MCF 10A (cell line): ENCODE measurements at regions of chr7 and their contacts with region 1.

Region 1: DNA sequence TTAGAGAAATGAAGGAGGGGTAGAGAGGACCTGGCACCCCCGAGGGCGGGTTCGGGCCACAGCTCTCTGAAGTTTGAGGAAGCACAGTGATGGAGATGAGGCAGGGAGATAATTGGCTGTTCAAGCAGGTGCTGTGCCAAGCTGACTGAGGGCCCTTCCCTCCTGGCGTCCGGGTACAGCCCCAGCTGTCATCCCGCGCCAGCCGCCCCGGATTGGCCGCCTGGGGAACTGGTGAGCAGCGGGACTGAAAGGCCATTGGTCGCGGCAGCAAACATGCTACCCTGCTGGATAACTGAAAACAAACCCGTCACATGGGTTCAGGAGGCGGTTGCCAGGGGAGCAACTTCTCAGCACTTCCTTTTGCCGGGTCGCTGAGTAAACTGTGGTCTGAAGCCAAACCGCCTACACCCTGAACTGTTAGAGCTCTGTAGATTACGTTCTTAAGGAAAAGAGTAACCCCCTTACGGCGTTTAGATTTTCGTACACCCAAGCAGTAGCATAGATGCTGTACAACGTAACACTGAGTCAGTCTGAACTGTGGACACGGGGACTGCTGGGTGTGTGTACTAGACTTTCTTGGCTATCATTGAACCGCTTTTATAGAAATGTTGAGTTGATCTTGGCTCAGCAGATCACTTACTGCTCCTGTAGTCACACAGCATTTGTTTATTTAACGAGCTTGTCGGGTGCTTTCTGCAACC is 1.3 kb downstream of the INSIG1 start:
- DNase-seq: peak; percentile 97
- H3K4me3 Mint-ChIP-seq: peak overlapping the region; percentile 82
- H3K27ac Mint-ChIP-seq: peak overlapping the region; percentile 52
- H3K4me1 Mint-ChIP-seq: peaks cover 22% of the 10 kb centered on the region
- H3K27me3 Mint-ChIP-seq: no peaks in the 10 kb centered on the region
- CTCF ChIP-seq: no peak

Region 2: DNA sequence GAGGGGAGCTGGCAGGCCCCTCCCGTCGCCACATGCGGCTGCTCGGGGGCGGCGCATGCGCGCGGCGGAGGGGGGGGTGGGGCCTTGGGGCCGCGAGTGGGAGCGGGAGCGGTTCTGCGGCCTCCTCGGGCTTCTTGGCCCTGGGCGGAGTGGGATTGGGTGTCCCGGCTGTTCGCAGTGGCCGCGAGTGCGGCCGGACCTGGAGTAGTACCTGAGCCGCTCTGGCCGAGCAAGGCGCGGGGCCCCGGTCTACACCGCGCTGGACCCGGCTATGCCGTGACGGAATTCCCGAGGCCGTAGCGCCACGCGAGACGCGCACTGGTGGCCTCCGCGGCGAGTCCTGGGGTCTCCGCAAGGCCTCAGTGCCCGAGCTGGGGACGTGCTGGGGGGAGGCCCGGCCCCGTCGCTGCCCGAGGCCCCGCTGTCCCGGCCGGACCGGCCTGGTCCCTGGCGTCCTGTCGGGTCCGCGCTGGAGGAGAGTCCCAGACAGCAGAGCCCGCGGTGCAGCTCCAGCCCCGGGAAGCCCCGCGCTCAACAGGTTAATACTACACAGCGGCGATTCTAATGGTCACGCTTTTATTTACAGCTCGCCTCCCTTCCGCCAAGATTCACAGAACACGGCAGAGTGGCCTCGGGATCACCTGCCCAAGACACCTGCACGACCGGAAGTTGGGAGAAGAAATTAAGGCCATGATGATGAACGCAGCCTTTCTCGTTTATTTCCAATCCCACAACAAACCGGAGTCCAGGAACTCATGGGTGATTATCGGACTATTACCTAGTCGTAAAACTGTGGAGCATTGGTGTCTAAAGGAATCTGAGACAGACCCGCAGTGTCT is 295.4 kb before region 1 on chr7:
- CTCF ChIA-PET with region 1: no interaction called
- POLR2A ChIA-PET with region 1: interaction called, 36 read pairs
- intact Hi-C with region 1: loop called (anchors 5 kb)
- DNase-seq: peak; percentile 76
- H3K4me3 Mint-ChIP-seq: peak overlapping the region; percentile 88
- H3K27ac Mint-ChIP-seq: peak overlapping the region; percentile 87
- H3K4me1 Mint-ChIP-seq: no peaks in the 10 kb centered on the region
- H3K27me3 Mint-ChIP-seq: no peaks in the 10 kb centered on the region
- CTCF ChIP-seq: no peak

Region 3: GRCh38 chr7:155166673-155167370 is 132.2 kb before region 1 on chr7:
- CTCF ChIA-PET with region 1: no interaction called
- POLR2A ChIA-PET with region 1: interaction called, 21 read pairs
- intact Hi-C with region 1: no loop called
- DNase-seq: peak; percentile 89
- H3K4me3 Mint-ChIP-seq: no peak overlapping the region
- H3K27ac Mint-ChIP-seq: peak overlapping the region; percentile 91
- H3K4me1 Mint-ChIP-seq: peaks cover 16% of the 10 kb centered on the region
- H3K27me3 Mint-ChIP-seq: peaks cover 6% of the 10 kb centered on the region
- CTCF ChIP-seq: no peak

Region 4: DNA sequence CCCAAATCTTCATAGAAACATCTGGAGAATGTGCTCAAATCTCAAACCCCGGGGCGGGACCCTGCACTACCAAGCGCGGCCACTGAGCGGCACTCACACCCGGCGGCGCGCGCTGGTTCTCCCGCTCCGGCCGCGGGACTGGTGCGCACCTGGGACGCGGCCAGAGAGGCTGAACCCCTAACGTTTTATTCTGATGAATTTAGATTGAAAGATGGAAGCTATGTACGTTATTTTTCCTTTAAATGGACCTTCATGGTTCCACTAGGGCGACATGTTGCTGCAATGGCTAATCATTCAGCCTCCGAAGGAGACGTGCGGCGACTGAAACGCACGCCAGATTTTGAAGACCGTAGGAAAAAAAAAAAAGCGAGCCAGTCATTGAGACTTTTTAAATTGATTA is 108.3 kb before region 1 on chr7:
- CTCF ChIA-PET with region 1: interaction called, 13 read pairs
- POLR2A ChIA-PET with region 1: interaction called, 3 read pairs
- intact Hi-C with region 1: loop called (anchors 1 kb)
- DNase-seq: peak; percentile 46
- H3K4me3 Mint-ChIP-seq: no peak overlapping the region
- H3K27ac Mint-ChIP-seq: no peak overlapping the region
- H3K4me1 Mint-ChIP-seq: peaks cover 5% of the 10 kb centered on the region
- H3K27me3 Mint-ChIP-seq: no peaks in the 10 kb centered on the region
- CTCF ChIP-seq: peak; percentile 85

Region 5: GRCh38 chr7:155205368-155206317 is 93.3 kb before region 1 on chr7:
- CTCF ChIA-PET with region 1: interaction called, 4 read pairs
- POLR2A ChIA-PET with region 1: interaction called, 10 read pairs
- intact Hi-C with region 1: loop called (anchors 5 kb)
- DNase-seq: peak; percentile 96
- H3K4me3 Mint-ChIP-seq: peak overlapping the region; percentile 17
- H3K27ac Mint-ChIP-seq: peak overlapping the region; percentile 56
- H3K4me1 Mint-ChIP-seq: peaks cover 17% of the 10 kb centered on the region
- H3K27me3 Mint-ChIP-seq: no peaks in the 10 kb centered on the region
- CTCF ChIP-seq: no peak

Region 6: GRCh38 chr7:155230168-155230593 is 68.8 kb before region 1 on chr7:
- CTCF ChIA-PET with region 1: interaction called, 5 read pairs
- POLR2A ChIA-PET with region 1: interaction called, 15 read pairs
- intact Hi-C with region 1: loop called (anchors 1 kb)
- DNase-seq: peak; percentile 95
- H3K4me3 Mint-ChIP-seq: peak overlapping the region; percentile 39
- H3K27ac Mint-ChIP-seq: peak overlapping the region; percentile 87
- H3K4me1 Mint-ChIP-seq: peaks cover 14% of the 10 kb centered on the region
- H3K27me3 Mint-ChIP-seq: no peaks in the 10 kb centered on the region
- CTCF ChIP-seq: no peak

Region 7: DNA sequence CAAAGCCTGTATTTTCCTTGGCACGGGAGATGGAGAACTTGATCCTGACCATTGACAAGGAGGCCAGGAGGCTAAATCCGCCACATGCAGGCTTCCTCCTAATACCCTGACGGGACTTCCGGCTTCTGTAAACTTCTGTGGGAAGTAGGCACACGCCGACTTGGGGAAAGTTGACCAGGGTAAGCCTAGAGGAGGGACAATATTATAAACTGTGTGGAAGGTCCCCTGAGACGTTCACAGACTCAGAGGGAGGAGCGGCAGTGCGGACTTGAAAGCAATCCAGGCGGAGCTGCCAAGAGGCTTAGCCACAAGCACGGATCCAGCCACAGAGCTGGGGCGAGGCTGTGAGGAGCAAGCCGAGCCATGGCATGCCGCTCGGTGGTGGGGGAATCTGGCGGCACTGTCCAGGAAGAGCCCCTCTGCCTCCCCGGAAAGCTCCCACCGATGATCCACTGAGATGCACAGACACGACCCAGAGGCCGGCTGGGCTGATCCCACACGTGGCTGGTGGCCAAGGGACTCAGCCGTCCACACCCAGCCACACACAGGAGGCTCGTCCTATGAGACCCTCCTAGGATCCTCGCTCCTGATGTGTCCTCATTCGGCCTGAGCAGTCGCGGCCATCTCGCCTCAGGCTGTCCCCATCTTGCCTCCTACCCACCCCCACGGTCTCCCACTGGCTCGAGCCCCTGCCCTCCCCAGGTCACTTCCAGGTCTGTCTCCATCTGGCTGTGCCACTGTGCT is 41.3 kb before region 1 on chr7:
- CTCF ChIA-PET with region 1: interaction called, 3 read pairs
- POLR2A ChIA-PET with region 1: interaction called, 36 read pairs
- intact Hi-C with region 1: loop called (anchors 1 kb)
- DNase-seq: peak; percentile 91
- H3K4me3 Mint-ChIP-seq: peak overlapping the region; percentile 64
- H3K27ac Mint-ChIP-seq: peak overlapping the region; percentile 92
- H3K4me1 Mint-ChIP-seq: peaks cover 16% of the 10 kb centered on the region
- H3K27me3 Mint-ChIP-seq: no peaks in the 10 kb centered on the region
- CTCF ChIP-seq: no peak

Region 8: GRCh38 chr7:155358061-155358947 is 59.3 kb after region 1 on chr7:
- CTCF ChIA-PET with region 1: no interaction called
- POLR2A ChIA-PET with region 1: no interaction called
- intact Hi-C with region 1: no loop called
- DNase-seq: peak; percentile 74
- H3K4me3 Mint-ChIP-seq: no peak overlapping the region
- H3K27ac Mint-ChIP-seq: no peak overlapping the region
- H3K4me1 Mint-ChIP-seq: peaks cover 5% of the 10 kb centered on the region
- H3K27me3 Mint-ChIP-seq: peaks cover 15% of the 10 kb centered on the region
- CTCF ChIP-seq: no peak